A549 (cell line): ENCODE measurements at regions of chr10 and their contacts with region 1.

Region 1: GRCh38 chr10:12129222-12130111 is at the start of gene SEC61A2:
- DNase-seq: peak; percentile 90 to 91
- ATAC-seq: peak; percentile 92 to 93
- H3K4me3 ChIP-seq: peak within 1 kb of the TSS; percentile 75
- H3K27ac ChIP-seq: peak within 1 kb of the TSS; percentile 82 to 95
- H3K4me1 ChIP-seq: peaks cover 6% of the 10 kb centered on the region; the same call in 2 of the 3 replicates
- CTCF ChIP-seq: no peak
- EP300 ChIP-seq: no peak
- POLR2A ChIP-seq: peak; percentile 81
- RAD21 ChIP-seq: no peak
- polyA plus RNA-seq, gene SEC61A2: 17.8 and 23.2 TPM in 2 replicates

Region 2: DNA sequence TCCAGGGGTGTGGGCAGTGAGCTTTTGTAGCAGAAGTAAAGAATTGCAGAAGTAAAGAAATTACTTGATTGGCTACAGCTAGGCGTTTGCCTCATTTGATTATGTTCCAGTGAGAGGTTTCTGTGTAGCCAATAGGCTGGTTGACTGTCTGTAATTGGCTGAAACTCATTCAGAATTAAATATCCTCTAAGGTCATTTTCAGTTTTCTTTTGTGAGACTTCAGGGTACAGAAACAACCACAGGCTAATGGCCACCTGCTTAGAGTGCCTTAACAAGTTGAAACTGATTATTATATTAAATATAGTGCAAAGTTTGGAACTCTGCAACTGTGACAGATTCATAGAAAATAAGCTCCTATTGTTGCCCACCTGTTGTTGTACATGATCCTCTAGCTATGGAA is 10.6 kb after region 1 on chr10:
- CTCF ChIA-PET with region 1: interaction called, 10 read pairs
- POLR2A ChIA-PET with region 1: no interaction called
- DNase-seq: no peak
- ATAC-seq: no peak
- H3K4me3 ChIP-seq: no peak overlapping the region
- H3K27ac ChIP-seq: no peak overlapping the region
- H3K4me1 ChIP-seq: no peaks in the 10 kb centered on the region
- CTCF ChIP-seq: no peak
- EP300 ChIP-seq: no peak
- POLR2A ChIP-seq: no peak
- RAD21 ChIP-seq: no peak

Region 3: DNA sequence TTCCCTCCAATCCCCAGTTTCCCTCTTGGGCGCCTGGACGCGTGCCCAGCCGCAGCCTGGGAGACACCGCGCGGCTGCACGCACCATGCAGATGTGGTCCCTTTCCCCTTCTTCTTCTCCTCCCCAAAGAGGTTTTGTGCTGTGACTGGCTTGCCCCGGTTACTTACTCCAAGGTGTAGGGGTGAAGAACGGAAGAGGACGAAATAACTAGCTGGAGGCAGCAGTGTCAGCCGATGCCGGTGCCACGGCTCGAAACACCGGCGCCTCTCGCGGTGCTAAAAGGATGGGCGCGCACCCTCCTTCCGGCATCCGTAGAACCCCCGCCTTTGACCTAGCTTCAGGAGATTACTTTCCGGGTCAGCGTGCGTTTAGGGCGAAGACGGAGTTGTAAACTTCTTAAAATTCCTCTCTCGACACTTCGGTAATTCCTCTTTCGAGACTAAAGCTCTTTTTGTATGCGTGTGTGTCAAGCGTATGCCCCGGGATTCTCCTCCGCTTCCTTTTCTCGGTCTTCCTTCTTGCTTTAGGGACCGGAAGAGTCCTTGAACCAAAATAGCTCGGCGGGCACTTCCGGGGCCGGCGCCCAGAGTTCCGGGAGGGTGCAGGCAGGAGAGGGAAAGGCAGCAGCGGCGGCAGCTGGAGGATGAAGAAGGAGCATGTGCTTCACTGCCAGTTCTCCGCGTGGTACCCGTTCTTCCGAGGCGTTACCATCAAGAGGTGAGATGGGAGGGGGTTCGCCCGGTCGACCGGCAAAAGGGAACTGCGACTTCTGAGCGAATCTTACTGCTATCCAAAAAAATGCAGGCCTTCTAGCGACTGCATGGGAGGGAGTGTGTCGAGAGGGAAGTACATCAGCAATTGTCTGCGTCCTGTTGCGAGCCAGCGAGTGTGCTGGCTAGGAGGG is 66.4 kb after region 1 on chr10 and contains the starts of genes CDC123 and NUDT5:
- CTCF ChIA-PET with region 1: no interaction called
- POLR2A ChIA-PET with region 1: no interaction called
- DNase-seq: peak; percentile 91 to 93
- ATAC-seq: peak; percentile 97 to 98
- H3K4me3 ChIP-seq: peak within 1 kb of the TSS; percentile 77
- H3K27ac ChIP-seq: peak within 1 kb of the TSS; percentile 87 to 94
- H3K4me1 ChIP-seq: peaks cover 29% of the 10 kb centered on the region
- CTCF ChIP-seq: no peak
- EP300 ChIP-seq: no peak
- POLR2A ChIP-seq: peak; percentile 80
- RAD21 ChIP-seq: no peak; a peak in 1 of 5 replicates
- polyA plus RNA-seq, gene CDC123: 164 and 193 TPM in 2 replicates
- polyA plus RNA-seq, gene NUDT5: 146 and 158 TPM in 2 replicates